Activated B cell treated with CpG ODN at 0.5 μM for 24 hours (primary cell): ENCODE measurements at regions of chr1 and their contacts with region 1.

Region 1: DNA sequence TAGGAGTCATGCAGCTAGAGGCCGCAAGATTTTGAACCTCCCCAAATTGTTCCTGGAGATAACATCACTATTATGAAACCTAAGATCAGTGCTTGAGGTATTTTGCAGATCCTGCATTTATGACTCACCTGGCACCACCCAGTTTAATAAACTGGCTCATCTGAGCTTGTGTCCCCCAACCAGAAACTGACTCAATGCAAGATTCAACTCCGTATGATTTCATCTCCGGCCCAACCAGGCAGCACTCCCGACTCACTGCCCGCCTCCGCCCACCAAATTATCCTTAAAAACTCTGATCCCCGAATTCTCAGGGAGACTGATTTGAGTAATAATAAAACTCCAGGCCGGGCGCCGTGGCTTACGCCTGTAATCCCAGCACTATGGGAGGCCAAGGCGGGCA is 87.2 kb downstream of the DESI2 start:
- DNase-seq: no peak
- ATAC-seq: no peak
- H3K4me3 Mint-ChIP-seq: no peak overlapping the region
- H3K27ac Mint-ChIP-seq: no peak overlapping the region
- H3K4me1 Mint-ChIP-seq: peaks cover 9% of the 10 kb centered on the region
- H3K27me3 Mint-ChIP-seq: no peaks in the 10 kb centered on the region
- CTCF ChIP-seq: no peak

Region 2: DNA sequence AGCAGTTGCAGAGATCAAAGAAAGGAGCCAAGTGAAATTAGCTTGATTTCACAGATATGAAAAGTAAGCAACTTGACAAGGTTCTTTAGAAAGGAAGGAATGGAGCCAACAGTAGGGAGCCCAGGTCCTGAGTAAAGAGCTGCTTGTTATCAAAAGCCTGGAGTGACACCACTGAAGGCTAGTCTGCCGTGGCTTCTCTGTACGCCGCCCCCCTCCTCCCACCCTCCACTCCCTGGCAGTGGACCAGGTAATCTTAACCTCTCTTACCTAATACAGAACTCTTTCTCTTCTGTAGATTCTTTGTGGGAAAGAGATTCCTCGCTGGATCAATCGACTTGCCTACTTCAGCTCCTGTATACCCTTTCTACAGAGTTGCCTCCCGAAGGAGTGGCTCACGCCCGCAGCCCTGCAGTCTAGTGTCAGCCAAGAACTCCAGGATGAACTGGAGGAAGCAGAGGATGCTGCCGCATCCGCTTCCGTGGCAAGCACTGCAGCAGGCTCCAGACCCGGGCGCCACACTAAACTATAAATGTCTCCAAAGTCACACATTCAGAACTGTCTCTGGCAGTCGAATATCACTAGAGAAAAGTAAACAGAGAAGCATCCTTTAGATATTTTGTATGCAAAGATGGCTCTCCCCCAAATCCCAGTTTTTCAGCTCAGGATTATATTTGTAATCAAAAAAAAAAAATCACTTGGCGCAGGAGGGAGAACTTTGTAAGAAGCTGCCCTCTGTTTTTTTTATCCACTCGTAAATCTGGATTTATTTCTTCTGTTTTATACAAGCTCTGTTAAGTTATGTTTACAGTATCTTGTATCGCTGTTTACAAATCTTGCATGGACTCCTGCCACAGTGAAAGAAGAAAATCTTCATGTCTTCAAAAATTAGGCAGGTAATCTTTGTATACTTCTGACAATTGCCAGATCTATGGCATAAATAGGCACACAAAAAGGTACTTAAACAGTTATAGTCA is 34.5 kb before region 1 on chr1:
- CTCF ChIA-PET with region 1: no interaction called
- POLR2A ChIA-PET with region 1: interaction called, 11 read pairs
- intact Hi-C with region 1: no loop called
- DNase-seq: no peak
- ATAC-seq: no peak
- H3K4me3 Mint-ChIP-seq: no peak overlapping the region
- H3K27ac Mint-ChIP-seq: no peak overlapping the region
- H3K4me1 Mint-ChIP-seq: no peaks in the 10 kb centered on the region
- H3K27me3 Mint-ChIP-seq: no peaks in the 10 kb centered on the region
- CTCF ChIP-seq: no peak

Region 3: GRCh38 chr1:244801246-244801645 is 61.2 kb after region 1 on chr1:
- CTCF ChIA-PET with region 1: no interaction called
- POLR2A ChIA-PET with region 1: no interaction called
- intact Hi-C with region 1: no loop called
- DNase-seq: peak; percentile 36
- ATAC-seq: peak; percentile 96
- H3K4me3 Mint-ChIP-seq: peak overlapping the region; percentile 55
- H3K27ac Mint-ChIP-seq: peak overlapping the region; percentile 59
- H3K4me1 Mint-ChIP-seq: peaks cover 5% of the 10 kb centered on the region
- H3K27me3 Mint-ChIP-seq: peaks cover 8% of the 10 kb centered on the region
- CTCF ChIP-seq: no peak